MCF 10A (cell line): ENCODE measurements at regions of chr1 and their contacts with region 1.

Region 1: GRCh38 chr1:19251305-19252196 is at the starts of genes EMC1 and MRTO4:
- DNase-seq: peak; percentile 81
- H3K4me3 Mint-ChIP-seq: peak within 1 kb of the TSS; percentile 95
- H3K27ac Mint-ChIP-seq: peak within 1 kb of the TSS; percentile 85
- H3K4me1 Mint-ChIP-seq: peaks cover 11% of the 10 kb centered on the region
- H3K27me3 Mint-ChIP-seq: no peaks in the 10 kb centered on the region
- CTCF ChIP-seq: no peak
- total RNA-seq, gene EMC1: 75.9 and 77.2 TPM in 2 replicates
- total RNA-seq, gene MRTO4: 37.3 and 46.0 TPM in 2 replicates

Region 2: DNA sequence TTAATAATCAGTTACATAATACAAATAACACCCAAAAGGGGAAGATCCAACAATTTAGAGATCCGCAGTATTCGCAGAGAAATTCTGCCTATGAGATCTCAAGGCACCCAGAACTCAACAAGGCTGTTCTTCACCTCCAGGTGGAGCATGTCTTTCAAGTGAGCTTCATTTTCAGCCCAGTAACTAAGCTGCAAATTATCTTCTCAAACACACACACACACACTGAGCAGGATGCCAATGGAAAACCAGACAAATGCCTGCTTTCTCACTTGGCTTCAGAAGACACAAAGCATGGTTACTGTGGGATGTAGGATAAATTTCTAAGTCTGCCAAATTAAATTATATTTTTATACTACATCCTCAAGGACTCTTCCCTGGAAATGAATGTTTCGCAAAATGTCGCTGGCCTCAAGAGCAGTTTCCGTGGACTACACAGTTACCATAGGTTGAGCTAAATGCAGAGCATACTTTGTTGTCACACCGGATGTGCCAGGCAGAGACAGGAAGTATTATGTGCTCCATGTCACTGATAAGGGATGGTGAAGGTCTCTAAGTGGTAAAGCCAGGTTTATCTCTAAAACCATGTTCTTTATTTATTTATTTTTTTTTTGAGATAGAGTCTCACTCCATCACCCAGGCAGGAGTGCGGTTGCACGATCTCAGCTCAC is 71.8 kb before region 1 on chr1:
- CTCF ChIA-PET with region 1: no interaction called
- POLR2A ChIA-PET with region 1: no interaction called
- intact Hi-C with region 1: no loop called
- DNase-seq: peak; percentile 20
- H3K4me3 Mint-ChIP-seq: no peak overlapping the region
- H3K27ac Mint-ChIP-seq: peak overlapping the region; percentile 5
- H3K4me1 Mint-ChIP-seq: no peaks in the 10 kb centered on the region
- H3K27me3 Mint-ChIP-seq: no peaks in the 10 kb centered on the region
- CTCF ChIP-seq: peak; percentile 10

Region 3: GRCh38 chr1:19209990-19210771 is 41.4 kb before region 1 on chr1 and contains the start of gene UBR4:
- CTCF ChIA-PET with region 1: interaction called, 5 read pairs
- POLR2A ChIA-PET with region 1: interaction called, 14 read pairs
- intact Hi-C with region 1: no loop called
- DNase-seq: peak; percentile 95
- H3K4me3 Mint-ChIP-seq: peak within 1 kb of the TSS; percentile 79
- H3K27ac Mint-ChIP-seq: peak within 1 kb of the TSS; percentile 94
- H3K4me1 Mint-ChIP-seq: peaks cover 24% of the 10 kb centered on the region
- H3K27me3 Mint-ChIP-seq: no peaks in the 10 kb centered on the region
- CTCF ChIP-seq: no peak
- total RNA-seq, gene UBR4: 154 and 181 TPM in 2 replicates

Region 4: GRCh38 chr1:19495799-19496624 is 244.5 kb after region 1 on chr1:
- CTCF ChIA-PET with region 1: no interaction called
- POLR2A ChIA-PET with region 1: no interaction called
- intact Hi-C with region 1: no loop called
- DNase-seq: no peak
- H3K4me3 Mint-ChIP-seq: no peak overlapping the region
- H3K27ac Mint-ChIP-seq: no peak overlapping the region
- H3K4me1 Mint-ChIP-seq: no peaks in the 10 kb centered on the region
- H3K27me3 Mint-ChIP-seq: no peaks in the 10 kb centered on the region
- CTCF ChIP-seq: no peak

Region 5: GRCh38 chr1:19698181-19698580 is 446.6 kb after region 1 on chr1:
- CTCF ChIA-PET with region 1: no interaction called
- POLR2A ChIA-PET with region 1: no interaction called
- intact Hi-C with region 1: no loop called
- DNase-seq: no peak
- H3K4me3 Mint-ChIP-seq: no peak overlapping the region
- H3K27ac Mint-ChIP-seq: no peak overlapping the region
- H3K4me1 Mint-ChIP-seq: no peaks in the 10 kb centered on the region
- H3K27me3 Mint-ChIP-seq: no peaks in the 10 kb centered on the region
- CTCF ChIP-seq: no peak